ENCODE measurements at regions of chr7 and their contacts with region 1.

Region 1: GRCh38 chr7:138886501-138886917 is 88.5 kb upstream of the ATP6V0A4 start:
- DNase-seq: peak; percentile 38
- H3K4me3 ChIP-seq: no peak overlapping the region
- H3K27ac ChIP-seq: no peak overlapping the region
- H3K27me3 ChIP-seq: no peaks in the 10 kb centered on the region
- CTCF ChIP-seq: peak; percentile 63

Region 2: GRCh38 chr7:138875794-138876193 is 10.7 kb before region 1 on chr7:
- CTCF ChIA-PET with region 1: interaction called, 59 read pairs
- POLR2A ChIA-PET with region 1: interaction called, 4 read pairs
- DNase-seq: peak; percentile 76
- H3K4me3 ChIP-seq: no peak overlapping the region
- H3K27ac ChIP-seq: peak overlapping the region; percentile 84
- H3K27me3 ChIP-seq: no peaks in the 10 kb centered on the region
- CTCF ChIP-seq: no peak

Region 3: DNA sequence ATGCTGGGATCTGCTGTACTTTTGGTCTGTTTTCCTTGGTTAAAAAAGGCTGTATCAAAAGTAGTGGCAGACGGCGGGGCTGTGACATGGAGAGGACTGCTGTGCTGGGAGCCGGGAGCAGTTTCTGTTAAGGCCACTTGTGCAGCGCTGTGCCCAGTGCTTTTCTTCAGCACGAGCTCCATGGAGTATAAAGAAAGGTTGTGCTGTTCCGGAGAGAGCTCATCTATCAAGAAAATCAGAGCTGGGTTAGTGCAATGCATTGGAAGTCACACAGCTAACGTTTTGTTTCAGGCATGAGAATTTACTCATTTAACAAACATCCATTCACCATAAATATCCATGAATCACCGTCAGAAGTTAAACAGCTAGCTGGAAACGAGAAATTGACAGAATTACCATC is 32.7 kb after region 1 on chr7:
- CTCF ChIA-PET with region 1: interaction called, 21 read pairs
- POLR2A ChIA-PET with region 1: no interaction called
- DNase-seq: no peak
- H3K4me3 ChIP-seq: no peak overlapping the region
- H3K27ac ChIP-seq: peak overlapping the region; percentile 35
- H3K27me3 ChIP-seq: no peaks in the 10 kb centered on the region
- CTCF ChIP-seq: no peak

Region 4: DNA sequence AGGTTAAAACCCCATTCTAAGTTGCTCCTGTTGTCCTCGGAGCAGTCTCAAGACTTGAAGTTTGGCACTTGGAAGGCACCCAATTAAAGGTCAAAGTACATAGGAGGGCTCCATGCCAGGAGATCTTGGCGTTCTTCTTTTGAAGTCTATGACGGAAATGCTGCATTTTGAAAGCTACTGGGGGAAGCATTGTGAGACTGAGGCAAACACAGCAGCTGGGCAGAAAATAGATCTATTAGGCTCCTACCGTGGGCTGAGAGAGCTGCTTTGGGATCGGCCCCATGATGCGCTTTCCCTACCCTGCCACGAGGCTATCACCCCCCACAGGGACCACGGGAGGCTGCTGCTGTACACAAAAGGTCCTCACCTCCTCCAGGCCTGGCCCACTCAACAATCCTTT is 74.7 kb after region 1 on chr7:
- CTCF ChIA-PET with region 1: interaction called, 10 read pairs
- POLR2A ChIA-PET with region 1: no interaction called
- DNase-seq: no peak
- H3K4me3 ChIP-seq: no peak overlapping the region
- H3K27ac ChIP-seq: no peak overlapping the region
- H3K27me3 ChIP-seq: no peaks in the 10 kb centered on the region
- CTCF ChIP-seq: no peak

Region 5: GRCh38 chr7:138981332-138982203 is 95.1 kb after region 1 on chr7 and contains the start of gene KIAA1549:
- CTCF ChIA-PET with region 1: interaction called, 16 read pairs
- POLR2A ChIA-PET with region 1: interaction called, 4 read pairs
- DNase-seq: no peak
- H3K4me3 ChIP-seq: peak within 1 kb of the TSS; percentile 74
- H3K27ac ChIP-seq: no peak within 1 kb of the TSS
- H3K27me3 ChIP-seq: no peaks in the 10 kb centered on the region
- CTCF ChIP-seq: no peak
- polyA plus RNA-seq, gene KIAA1549: 2.9 and 4.4 TPM in 2 replicates

Region 6: DNA sequence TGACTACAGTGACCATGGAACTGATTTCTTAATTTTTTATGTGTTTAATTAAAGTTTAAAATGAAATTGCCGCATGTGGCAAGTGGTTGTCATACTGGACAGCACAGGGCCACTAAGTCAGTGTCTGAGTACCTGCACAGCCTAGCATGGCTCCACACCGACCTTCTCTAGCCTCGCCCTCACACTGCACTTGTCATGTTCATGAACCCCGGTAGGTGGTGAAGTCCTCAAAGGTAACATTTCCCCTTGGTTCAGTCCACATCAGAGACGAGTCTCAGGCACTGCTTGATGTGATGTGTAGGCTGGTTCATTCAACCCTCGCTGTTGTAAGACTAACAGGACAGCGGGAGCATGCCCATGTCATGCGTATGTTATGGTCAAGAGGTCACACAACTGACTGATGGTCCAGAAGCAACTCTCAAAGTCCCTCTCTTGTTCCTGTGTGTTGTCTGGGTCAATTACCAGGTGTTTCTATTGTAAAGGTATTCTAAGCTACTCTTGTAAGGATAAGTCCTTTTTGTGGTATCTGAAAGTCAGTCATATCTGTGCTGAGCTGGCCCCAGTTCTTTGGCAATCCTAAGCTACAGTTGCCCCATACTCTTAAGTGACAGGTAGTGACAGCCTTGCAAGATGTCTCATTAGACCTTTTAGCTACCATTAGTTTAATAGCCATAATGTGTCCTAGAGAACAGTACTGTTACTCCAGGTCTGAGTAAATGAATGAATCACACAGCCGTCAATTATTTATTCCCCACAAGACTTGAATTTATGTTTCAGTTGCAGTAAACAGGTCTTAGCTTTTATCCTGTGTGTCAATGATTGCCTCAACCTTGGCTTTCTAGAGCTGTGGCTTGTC is 182.3 kb after region 1 on chr7:
- CTCF ChIA-PET with region 1: interaction called, 74 read pairs
- POLR2A ChIA-PET with region 1: no interaction called
- DNase-seq: no peak
- H3K4me3 ChIP-seq: no peak overlapping the region
- H3K27ac ChIP-seq: no peak overlapping the region
- H3K27me3 ChIP-seq: no peaks in the 10 kb centered on the region
- CTCF ChIP-seq: no peak